Dorsolateral prefrontal cortex (tissue), 120 donors: ENCODE measurements at regions of chr11 and their contacts with region 1.

Region 1: GRCh38 chr11:44593251-44593650 is 27.8 kb downstream of the CD82 start:
- DNase-seq: peak; percentile 26 to 94 (median 91)
- H3K4me3 ChIP-seq: peak overlapping the region in 1 of 59 donors; percentile 19
- H3K27ac ChIP-seq: peak overlapping the region; percentile 59 to 96 (median 89)
- H3K27me3 ChIP-seq: no peaks in the 10 kb centered on the region
- CTCF ChIP-seq: peak in 8 of 56 donors; percentile 10 to 31 (median 24)

Region 2: DNA sequence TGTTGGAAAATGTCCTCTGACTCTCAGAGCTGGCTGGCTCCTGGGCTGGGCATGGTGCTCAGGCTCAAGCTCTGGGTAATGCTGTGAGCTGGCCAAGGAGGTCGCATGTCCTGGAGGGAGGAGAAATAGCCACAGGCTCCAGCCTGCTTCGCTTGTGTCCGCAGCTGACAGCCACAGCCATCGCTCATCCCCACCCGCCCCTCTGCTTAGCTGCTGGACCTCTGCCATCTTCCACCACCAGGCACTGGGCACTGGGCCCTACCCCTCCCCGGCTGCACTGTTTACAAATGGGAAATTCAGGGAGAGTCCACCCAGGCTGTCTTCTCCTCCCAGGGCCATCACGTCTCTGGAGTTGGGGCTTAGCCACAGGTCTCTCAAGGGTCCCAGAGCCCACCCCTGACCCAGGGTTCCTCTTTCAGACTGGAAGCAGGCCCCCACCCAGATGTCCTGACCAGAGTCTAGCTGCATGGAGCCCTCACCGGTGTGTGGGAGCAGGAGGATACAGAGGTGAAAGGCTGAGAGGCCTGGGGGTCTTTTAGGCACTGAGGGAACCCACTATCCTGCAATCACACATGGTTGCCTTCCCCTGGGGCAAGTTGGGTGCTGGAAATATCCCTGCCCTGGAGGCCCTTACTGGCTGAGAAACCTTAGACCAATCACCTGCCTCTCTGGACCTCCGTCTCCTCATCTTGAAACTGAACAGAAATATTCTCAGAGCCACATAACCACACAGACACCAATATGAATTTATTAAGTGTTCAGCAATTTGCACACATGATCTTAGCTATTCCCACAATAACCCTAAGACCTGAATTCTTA is 34.9 kb after region 1 on chr11:
- intact Hi-C with region 1: loop called in 1 of 2 experiments (anchors 1 kb)
- DNase-seq: peak; percentile 89 to 98 (median 94)
- H3K4me3 ChIP-seq: peak overlapping the region in 1 of 59 donors; percentile 10
- H3K27ac ChIP-seq: peak overlapping the region; percentile 55 to 98 (median 92)
- H3K27me3 ChIP-seq: peaks cover 0 to 6% (median 0%) of the 10 kb centered on the region in 45 donors
- CTCF ChIP-seq: peak in 29 of 56 donors; percentile 6 to 57 (median 26)

Region 3: GRCh38 chr11:44899959-44900358 is 306.7 kb after region 1 on chr11:
- intact Hi-C with region 1: no loop called
- DNase-seq: no peak
- H3K4me3 ChIP-seq: no peak overlapping the region
- H3K27ac ChIP-seq: no peak overlapping the region
- H3K27me3 ChIP-seq: peaks cover 0 to 3% (median 0%) of the 10 kb centered on the region in 45 donors
- CTCF ChIP-seq: no peak